ENCODE measurements at regions of chr7 and their contacts with region 1.

Region 1: DNA sequence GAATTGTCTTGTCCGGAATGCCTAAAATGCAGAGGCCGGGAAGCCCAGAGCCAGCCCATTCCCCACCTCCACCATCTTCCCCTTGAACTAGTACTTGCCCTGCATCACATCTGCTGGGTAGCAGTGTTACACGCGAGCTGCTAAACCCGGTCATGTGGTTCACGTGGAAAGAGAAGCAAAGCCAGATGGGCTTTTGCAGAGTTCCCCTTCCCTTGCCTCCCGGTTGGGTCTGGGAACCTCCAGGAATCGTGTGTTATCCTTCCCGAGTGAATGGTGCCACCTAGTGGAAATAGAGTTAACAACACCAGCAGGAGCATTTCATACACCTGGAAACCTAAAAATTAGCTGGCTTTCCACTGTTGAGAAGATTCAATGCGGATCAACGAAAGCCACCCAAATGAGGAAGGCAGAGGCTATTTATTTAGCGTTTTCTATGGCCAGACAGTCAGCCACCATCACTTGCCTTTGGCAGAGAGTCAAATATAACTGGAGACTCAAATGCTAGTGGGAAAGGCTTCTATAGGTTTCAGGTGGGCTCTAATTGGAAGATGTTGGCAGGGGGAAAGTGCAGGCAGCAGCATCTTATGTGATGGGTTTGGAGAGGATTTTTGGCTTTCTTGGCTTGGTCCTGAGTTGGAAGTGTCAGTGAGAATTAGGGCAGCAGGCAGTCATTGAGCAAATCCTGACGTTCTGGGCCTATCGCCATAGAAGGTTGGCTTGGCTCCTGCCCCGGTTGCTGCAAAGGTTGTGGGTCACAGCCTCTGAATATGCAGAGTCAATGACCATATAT is 12.9 kb upstream of the DENND2A start:
- DNase-seq: peak; percentile 82
- H3K4me3 ChIP-seq: no peak overlapping the region
- H3K27ac ChIP-seq: no peak overlapping the region
- H3K4me1 ChIP-seq: peaks cover 15% of the 10 kb centered on the region
- H3K27me3 ChIP-seq: no peaks in the 10 kb centered on the region
- CTCF ChIP-seq: peak; percentile 78

Region 2: DNA sequence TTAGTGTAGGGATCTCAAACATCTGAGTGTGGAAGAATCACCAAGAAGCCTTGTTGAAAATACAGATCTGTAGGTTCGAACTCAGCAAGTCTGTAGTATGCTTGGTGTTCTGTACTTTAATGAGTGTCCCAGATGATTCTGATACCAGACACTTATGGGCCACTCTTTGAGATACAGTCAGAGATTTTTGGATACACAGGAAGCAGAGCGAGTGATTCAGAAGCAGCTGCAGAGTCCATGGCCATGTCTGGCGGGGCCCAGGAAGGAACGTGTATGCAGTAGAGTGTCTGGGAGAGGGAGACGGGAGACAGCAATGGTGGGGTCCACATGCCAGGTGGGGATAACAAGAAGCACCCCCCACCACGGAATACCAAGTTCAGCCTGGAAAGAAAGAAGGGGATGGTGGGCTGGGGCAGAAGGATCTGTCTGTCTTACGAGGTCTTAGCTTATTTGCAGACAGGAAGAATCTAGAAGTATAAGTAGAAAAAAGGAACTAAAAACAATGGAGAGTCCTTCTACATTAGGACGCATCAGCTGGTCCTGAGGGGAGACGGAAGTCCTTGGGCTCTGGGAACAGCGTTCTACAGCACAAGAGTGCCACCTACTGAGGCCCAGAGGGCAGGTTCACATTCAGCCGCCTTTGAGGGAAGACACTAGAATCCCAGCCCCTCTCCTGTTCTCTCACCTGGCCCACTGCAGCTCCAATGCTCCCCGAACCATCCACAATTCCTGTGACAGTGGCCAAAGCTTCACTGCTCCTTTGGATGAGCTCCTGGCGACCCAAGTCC is 310.6 kb before region 1 on chr7:
- intact Hi-C with region 1: loop called (anchors 10 kb)
- DNase-seq: peak; percentile 49
- H3K4me3 ChIP-seq: no peak overlapping the region
- H3K27ac ChIP-seq: no peak overlapping the region
- H3K4me1 ChIP-seq: peaks cover 3% of the 10 kb centered on the region
- H3K27me3 ChIP-seq: no peaks in the 10 kb centered on the region
- CTCF ChIP-seq: peak; percentile 50

Region 3: DNA sequence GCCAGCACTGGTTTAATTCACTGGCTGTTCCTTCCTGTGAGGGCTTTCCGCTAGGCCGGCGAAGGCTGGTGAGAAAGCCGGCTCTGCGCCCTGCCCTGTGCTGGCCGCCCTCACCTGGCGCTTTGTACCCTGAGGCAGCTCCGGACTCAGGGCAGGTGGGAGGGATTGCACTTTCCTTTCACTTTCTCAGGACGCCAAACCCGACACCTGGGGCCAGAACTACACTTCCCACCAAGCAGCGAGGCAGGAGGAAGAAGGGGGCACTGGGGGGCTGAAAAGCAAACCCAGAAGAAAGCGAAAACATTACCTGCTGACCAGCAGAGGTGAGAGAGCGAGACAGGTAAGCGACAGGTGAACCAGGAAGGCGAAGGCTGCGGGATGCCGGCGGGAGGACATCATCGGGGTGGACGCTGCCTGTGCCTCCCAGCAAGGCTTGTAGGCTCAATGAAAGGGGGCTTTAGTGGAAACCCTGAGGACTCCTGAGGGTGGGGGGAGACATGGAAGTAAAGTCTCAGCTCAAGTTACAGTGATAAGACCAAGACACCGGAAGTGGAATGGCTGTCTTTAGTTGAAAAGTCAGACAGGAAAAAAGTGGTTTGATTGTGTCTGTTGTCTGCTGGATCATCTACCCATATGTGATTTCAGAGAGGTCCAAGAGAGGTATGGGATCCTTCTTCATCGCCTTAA is 249.5 kb before region 1 on chr7 and contains the start of gene RAB19:
- intact Hi-C with region 1: no loop called
- DNase-seq: peak; percentile 79
- H3K4me3 ChIP-seq: peak within 1 kb of the TSS; percentile 47
- H3K27ac ChIP-seq: peak within 1 kb of the TSS; percentile 45
- H3K4me1 ChIP-seq: no peaks in the 10 kb centered on the region
- H3K27me3 ChIP-seq: no peaks in the 10 kb centered on the region
- CTCF ChIP-seq: no peak
- total RNA-seq, gene RAB19: 18.8 to 22.7 TPM

Region 4: DNA sequence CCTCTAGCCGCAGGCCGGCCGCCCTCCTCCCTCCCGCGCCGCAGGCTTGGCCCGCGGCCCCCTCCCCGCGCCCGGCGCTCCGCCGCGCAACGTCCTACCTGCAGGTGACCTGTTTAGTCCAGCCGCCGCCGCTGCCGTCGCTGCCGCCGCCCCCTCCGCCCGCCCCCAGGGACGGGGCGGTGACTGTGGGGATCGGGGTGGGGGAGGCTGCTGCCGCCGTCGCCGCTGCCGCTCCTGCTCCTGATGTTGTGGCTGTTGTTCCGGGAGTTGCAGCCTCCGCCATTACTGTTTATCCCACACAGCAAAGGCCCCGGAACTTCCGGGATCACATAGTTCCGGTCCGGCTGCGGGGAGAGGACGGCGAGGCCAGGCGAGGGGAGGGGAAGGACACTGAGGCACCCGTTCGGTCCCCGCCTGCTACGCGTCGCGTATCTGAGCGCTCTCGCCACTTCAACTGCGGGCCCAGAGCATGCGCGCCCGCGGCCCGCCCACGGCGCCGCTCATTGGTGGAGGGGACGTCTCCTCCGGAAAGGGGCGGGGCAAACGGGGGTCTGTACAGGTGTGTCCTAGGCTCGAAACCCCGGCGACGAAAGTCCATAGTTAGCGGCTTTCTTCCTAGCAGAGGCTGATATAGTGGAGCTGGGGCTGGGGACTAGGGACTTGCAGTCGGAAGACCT is 174.3 kb before region 1 on chr7 and contains the start of gene MKRN1:
- intact Hi-C with region 1: loop called (anchors 5 kb)
- DNase-seq: peak; percentile 97
- H3K4me3 ChIP-seq: peak within 1 kb of the TSS; percentile 93
- H3K27ac ChIP-seq: peak within 1 kb of the TSS; percentile 99
- H3K4me1 ChIP-seq: peaks cover 7% of the 10 kb centered on the region
- H3K27me3 ChIP-seq: no peaks in the 10 kb centered on the region
- CTCF ChIP-seq: no peak
- total RNA-seq, gene MKRN1: 175 to 240 TPM

Region 5: DNA sequence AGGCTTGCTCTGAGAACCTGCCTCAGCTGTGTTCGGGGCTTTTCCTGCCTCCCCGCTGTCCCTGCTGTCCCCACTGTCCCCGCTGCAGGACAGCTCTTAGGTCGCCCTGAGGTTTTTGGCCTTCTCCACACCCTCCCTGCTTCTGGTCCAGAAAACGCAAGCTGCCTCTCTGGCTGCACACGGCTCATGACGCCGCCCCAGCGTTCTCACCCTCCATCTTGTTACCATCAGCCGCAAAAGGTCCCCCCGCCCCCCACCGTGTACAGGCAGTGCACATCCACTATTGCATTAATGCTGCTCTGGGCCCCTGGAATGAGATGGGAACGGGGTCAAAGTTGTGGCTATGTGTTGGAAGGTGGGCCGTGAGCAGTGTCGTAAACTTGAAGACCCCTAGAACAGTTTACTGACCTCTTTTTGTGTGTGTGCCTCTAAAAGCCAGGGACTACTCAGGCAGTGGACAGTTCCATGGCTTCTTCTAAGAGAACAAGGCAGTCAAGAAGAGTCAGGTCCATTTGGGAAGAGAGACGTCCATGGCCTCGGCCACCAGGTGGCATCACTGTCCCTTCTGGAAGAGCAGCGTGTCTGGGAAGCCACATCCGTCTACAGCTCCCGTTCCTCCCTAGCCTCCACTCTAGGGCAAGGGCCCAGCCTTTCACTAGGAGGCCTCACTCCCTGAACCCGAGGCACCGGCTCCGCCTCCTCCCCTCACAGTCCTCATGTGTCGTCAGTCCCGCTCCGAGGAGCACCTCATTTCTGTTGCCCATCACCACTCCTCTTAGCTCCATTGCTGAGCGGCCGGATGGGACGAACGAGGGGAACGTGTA is 135.8 kb before region 1 on chr7:
- intact Hi-C with region 1: loop called (anchors 2 kb)
- DNase-seq: peak; percentile 97
- H3K4me3 ChIP-seq: peak overlapping the region; percentile 28
- H3K27ac ChIP-seq: peak overlapping the region; percentile 96
- H3K4me1 ChIP-seq: no peaks in the 10 kb centered on the region
- H3K27me3 ChIP-seq: no peaks in the 10 kb centered on the region
- CTCF ChIP-seq: peak; percentile 77